ENCODE measurements at regions of chr9 and their contacts with region 1.

Region 1: DNA sequence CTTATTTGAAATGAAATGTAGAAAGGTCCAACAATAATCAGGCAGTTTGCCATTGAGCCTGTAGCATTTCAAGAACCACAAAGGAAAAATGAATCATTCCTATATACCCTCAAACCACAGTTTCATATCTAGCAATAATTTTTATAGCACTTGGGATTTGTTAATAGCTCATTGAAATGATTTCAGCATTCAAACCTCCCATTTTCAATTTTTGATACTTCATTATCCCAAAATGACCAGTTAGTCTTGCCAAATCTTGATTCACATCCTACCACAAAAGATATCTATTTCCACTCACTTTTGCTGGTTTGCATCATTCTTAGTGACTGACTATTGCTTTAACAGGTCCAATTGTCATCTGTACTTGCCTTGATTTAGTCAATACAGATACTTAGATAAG is 790.1 kb downstream of the TLE1 start:
- DNase-seq: peak; percentile 77
- ATAC-seq: peak; percentile 77
- H3K4me3 ChIP-seq: no peak overlapping the region
- H3K27ac ChIP-seq: peak overlapping the region; percentile 35
- H3K4me1 ChIP-seq: peaks cover 13% of the 10 kb centered on the region
- H3K27me3 ChIP-seq: no peaks in the 10 kb centered on the region
- CTCF ChIP-seq: no peak

Region 2: GRCh38 chr9:81028504-81028903 is 129.3 kb after region 1 on chr9:
- CTCF ChIA-PET with region 1: no interaction called
- POLR2A ChIA-PET with region 1: no interaction called
- intact Hi-C with region 1: loop called (anchors 10 kb)
- DNase-seq: peak; percentile 91
- ATAC-seq: peak; percentile 96
- H3K4me3 ChIP-seq: no peak overlapping the region; the same call in 1 of the 2 replicates
- H3K27ac ChIP-seq: peak overlapping the region; percentile 73
- H3K4me1 ChIP-seq: peaks cover 35% of the 10 kb centered on the region
- H3K27me3 ChIP-seq: no peaks in the 10 kb centered on the region
- CTCF ChIP-seq: no peak